ENCODE measurements at regions of chr1 and their contacts with region 1.

Region 1: GRCh38 chr1:35564037-35564883 is 6.7 kb downstream of the NCDN start:
- DNase-seq: peak; percentile 89
- H3K4me3 ChIP-seq: no peak overlapping the region
- H3K27ac ChIP-seq: no peak overlapping the region
- H3K4me1 ChIP-seq: peaks cover 0 to 62% (median 12%) of the 10 kb centered on the region in 6 donors
- H3K27me3 ChIP-seq: no peaks in the 10 kb centered on the region
- CTCF ChIP-seq: peak; percentile 55 to 92 (median 79)
- POLR2A ChIP-seq: no peak

Region 2: GRCh38 chr1:35460796-35461195 is 103.5 kb before region 1 on chr1:
- intact Hi-C with region 1: no loop called
- DNase-seq: no peak
- H3K4me3 ChIP-seq: no peak overlapping the region
- H3K27ac ChIP-seq: no peak overlapping the region
- H3K4me1 ChIP-seq: no peaks in the 10 kb centered on the region
- H3K27me3 ChIP-seq: no peaks in the 10 kb centered on the region
- CTCF ChIP-seq: no peak
- POLR2A ChIP-seq: no peak

Region 3: DNA sequence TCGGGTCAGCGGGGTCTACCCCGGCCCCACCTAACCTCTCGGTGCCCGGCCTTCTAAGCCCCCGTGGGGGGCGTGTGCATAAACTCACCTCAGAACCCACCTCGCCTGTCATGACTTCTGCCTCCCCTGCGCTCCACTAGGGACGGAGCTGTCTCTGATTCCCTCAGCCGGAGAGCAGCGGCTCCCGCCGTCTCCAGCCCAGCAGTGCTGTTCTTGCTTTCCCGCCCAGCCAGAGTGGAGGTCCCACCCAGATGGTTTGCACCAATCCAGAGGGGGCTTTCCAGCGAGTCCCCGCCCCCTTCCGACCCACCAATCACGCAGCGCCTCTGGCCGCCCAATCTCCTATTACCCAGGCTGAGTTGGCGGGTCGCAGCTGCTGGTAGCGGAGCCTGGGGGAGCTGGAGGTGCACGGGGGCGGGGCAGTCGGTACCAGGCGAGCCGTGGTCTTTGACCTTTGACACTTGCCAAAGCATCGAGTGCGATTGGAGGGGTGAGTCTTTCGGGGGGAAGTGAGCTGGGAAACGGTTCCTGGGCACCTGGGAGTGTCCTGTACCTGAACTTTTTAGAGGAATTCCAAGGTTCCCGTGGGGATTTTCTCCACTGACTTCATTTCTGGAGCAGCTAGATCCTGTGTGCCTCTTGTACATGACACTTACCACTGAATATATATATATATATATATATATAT is 205.6 kb after region 1 on chr1 and contains the start of gene CLSPN:
- intact Hi-C with region 1: loop called (anchors 5 kb)
- DNase-seq: peak; percentile 95
- H3K4me3 ChIP-seq: peak within 1 kb of the TSS; percentile 98 to 100 (median 99)
- H3K27ac ChIP-seq: peak within 1 kb of the TSS; percentile 77 to 93 (median 89)
- H3K4me1 ChIP-seq: peaks cover 3 to 35% (median 15%) of the 10 kb centered on the region in 6 donors
- H3K27me3 ChIP-seq: no peaks in the 10 kb centered on the region
- CTCF ChIP-seq: peak in 1 of 11 experiments; percentile 12
- POLR2A ChIP-seq: peak in 1 of 3 donors; percentile 9
- total RNA-seq, gene CLSPN: 3.1 to 7.1 (median 5.0) TPM

Measured in spleen (tissue), 13 donors.